Ascending aorta (tissue), 2 donors: ENCODE measurements at regions of chrX and their contacts with region 1.

Region 1: DNA sequence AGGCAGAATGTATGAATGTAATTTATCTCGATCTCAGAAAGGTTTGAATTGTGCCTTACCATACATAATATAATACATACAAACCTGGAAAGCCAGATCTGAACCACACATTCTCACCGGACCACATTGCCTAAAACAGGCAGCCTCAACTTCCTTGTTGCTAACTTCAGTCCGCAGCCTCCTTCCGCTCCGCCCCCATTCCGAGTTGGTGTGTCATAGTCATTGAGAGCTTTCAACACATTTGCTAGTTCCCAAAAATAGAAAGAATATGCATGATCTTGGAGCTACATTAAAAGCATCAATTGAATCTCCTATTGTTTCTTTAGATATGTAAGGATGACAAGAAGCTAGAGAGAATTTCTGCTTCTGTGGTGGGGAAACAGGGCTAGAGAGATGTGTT is 127.2 kb downstream of the ARHGEF9 start:
- DNase-seq: peak; percentile 68 to 89
- H3K4me3 ChIP-seq: no peak overlapping the region
- H3K27ac ChIP-seq: peak overlapping the region; percentile 76 to 77
- H3K4me1 ChIP-seq: peaks cover 4 to 6% of the 10 kb centered on the region in 2 donors
- H3K27me3 ChIP-seq: no peaks in the 10 kb centered on the region
- CTCF ChIP-seq: no peak

Region 2: DNA sequence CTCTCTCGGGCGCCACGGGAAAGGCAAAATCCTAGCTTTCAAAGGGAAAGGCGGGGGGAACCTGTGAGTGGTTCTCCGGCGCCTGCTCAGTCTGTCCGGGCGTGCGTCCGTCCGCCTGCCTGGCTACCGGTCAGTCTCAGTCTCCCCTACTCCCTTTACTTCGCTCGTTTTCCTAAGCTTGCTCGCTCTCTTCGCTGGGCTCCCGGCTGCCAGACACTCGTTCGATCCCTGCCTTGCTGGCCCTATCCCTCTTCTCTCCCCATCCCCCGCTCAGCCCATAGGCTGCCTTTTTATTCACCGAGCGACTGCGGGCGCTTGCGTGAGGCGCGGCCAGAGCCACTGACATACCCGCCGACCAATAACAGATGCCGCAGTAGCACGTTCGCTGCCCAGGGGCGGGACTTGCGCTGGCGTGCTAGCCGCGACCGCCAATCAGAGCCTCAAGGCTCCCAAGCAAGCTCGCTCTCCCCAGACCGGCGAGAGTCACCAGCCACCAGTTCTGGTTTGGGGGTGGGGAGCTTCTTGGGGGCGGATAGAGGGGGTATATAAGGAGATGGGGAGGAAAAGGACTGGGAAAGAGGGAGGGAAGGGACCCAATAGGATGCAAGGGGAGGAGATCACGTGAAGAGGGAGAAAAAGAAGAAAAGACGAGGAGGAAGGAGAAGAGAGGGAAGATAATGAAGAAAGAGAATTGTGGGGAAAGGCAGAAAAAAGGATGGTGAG is 97.2 kb after region 1 on chrX:
- intact Hi-C with region 1: loop called (anchors 5 kb)
- DNase-seq: peak; percentile 89 to 96
- H3K4me3 ChIP-seq: peak overlapping the region; percentile 61 to 71
- H3K27ac ChIP-seq: peak overlapping the region; percentile 89 to 91
- H3K4me1 ChIP-seq: no peaks in the 10 kb centered on the region
- H3K27me3 ChIP-seq: no peaks in the 10 kb centered on the region
- CTCF ChIP-seq: no peak